CD4-positive, alpha-beta memory T cell (primary cell): ENCODE measurements at regions of chr17 and their contacts with region 1.

Region 1: GRCh38 chr17:63697341-63698286 is 2.3 kb downstream of the LIMD2 start:
- DNase-seq: peak; percentile 85 to 87 (median 86)
- H3K4me3 ChIP-seq: peak overlapping the region; percentile 90 to 98
- H3K4me3 Mint-ChIP-seq: peak overlapping the region; percentile 94 to 99 (median 98)
- H3K27ac ChIP-seq: peak overlapping the region; percentile 69
- H3K27ac Mint-ChIP-seq: peak overlapping the region; percentile 96 to 99 (median 98)
- H3K4me1 ChIP-seq: peaks cover 62% of the 10 kb centered on the region
- H3K4me1 Mint-ChIP-seq: peaks cover 21 to 73% (median 47%) of the 10 kb centered on the region in 4 donors
- H3K27me3 ChIP-seq: no peaks in the 10 kb centered on the region
- H3K27me3 Mint-ChIP-seq: no peaks in the 10 kb centered on the region

Region 2: GRCh38 chr17:63412234-63412633 is 285.4 kb before region 1 on chr17:
- CTCF ChIA-PET with region 1: no interaction called
- POLR2A ChIA-PET with region 1: no interaction called
- intact Hi-C with region 1: no loop called
- DNase-seq: no peak
- H3K4me3 ChIP-seq: no peak overlapping the region
- H3K4me3 Mint-ChIP-seq: no peak overlapping the region
- H3K27ac ChIP-seq: no peak overlapping the region
- H3K27ac Mint-ChIP-seq: peak overlapping the region in 1 of 7 donors; percentile 13
- H3K4me1 ChIP-seq: no peaks in the 10 kb centered on the region
- H3K4me1 Mint-ChIP-seq: no peaks in the 10 kb centered on the region
- H3K27me3 ChIP-seq: no peaks in the 10 kb centered on the region
- H3K27me3 Mint-ChIP-seq: no peaks in the 10 kb centered on the region

Region 3: DNA sequence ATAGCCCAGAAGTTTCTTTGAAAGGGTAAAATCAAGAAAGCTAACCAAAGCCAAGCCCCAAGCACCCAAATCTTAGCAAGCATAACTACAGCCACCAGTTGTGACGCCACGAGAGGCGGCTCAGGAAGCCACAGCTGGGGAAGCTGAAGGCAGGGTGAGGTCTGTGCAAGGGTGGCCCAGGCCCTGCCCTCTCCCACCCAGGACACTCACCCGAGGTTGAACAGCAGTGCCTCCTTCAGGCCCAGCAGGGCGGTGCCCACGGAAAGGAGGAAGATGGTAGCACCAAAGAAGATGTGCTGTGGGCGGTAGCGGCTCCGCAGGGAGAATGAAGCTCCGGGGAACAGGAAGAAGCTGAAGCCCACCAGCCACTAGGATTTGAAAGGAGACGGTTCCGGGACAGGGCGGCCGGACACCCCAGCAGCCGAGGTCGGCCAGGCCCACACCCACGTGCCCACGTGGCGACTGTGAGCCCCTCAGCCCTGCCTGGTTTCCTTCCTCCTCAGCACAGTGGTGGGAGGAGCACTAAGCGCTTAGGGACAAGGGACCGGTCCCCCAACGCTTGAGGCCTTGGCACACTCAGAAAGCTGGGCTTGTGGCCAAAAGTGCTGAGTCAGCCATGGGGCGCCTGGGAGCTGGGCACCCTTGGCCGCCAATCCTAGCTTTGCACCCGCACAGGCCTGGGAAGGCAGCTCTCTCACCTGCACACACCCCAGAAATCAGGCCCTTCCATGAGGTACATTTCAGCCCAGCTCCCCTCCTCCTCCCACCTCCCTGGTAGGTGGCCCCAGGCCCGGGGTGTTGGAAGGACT is 262.5 kb before region 1 on chr17:
- CTCF ChIA-PET with region 1: interaction called, 4 read pairs
- POLR2A ChIA-PET with region 1: interaction called, 52 read pairs
- intact Hi-C with region 1: no loop called
- DNase-seq: peak; percentile 70 to 82 (median 76)
- H3K4me3 ChIP-seq: no peak overlapping the region
- H3K4me3 Mint-ChIP-seq: peak overlapping the region in 7 of 8 donors; percentile 48 to 79 (median 65)
- H3K27ac ChIP-seq: no peak overlapping the region
- H3K27ac Mint-ChIP-seq: peak overlapping the region; percentile 86 to 97 (median 92)
- H3K4me1 ChIP-seq: peaks cover 56% of the 10 kb centered on the region
- H3K4me1 Mint-ChIP-seq: peaks cover 15 to 70% (median 41%) of the 10 kb centered on the region in 4 donors
- H3K27me3 ChIP-seq: no peaks in the 10 kb centered on the region
- H3K27me3 Mint-ChIP-seq: no peaks in the 10 kb centered on the region

Region 4: DNA sequence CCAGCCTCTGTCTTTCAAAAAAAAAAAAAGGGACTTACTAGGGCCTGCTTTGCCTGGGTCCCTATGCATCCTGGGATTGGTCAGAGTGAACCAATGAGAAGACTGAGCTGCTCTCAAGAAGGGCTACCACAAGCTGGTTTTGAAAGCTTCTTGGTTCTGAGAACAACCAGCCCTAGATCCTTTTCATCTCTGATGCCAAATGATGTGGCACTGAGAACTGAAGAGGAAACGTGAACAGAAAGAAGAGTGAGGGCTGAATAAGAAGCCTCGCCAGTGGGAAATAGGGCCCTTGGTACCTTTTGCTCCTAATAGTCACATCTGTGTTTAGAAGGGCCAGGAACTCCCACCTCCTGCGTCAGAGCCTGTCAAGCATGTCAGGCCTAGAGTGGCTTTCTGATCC is 86.3 kb before region 1 on chr17:
- CTCF ChIA-PET with region 1: interaction called, 8 read pairs
- POLR2A ChIA-PET with region 1: interaction called, 29 read pairs
- intact Hi-C with region 1: no loop called
- DNase-seq: peak in 4 of 5 donors; percentile 24 to 46 (median 39)
- H3K4me3 ChIP-seq: no peak overlapping the region
- H3K4me3 Mint-ChIP-seq: peak overlapping the region; percentile 9 to 80 (median 69)
- H3K27ac ChIP-seq: peak overlapping the region; percentile 46
- H3K27ac Mint-ChIP-seq: peak overlapping the region; percentile 62 to 99 (median 93)
- H3K4me1 ChIP-seq: peaks cover 36% of the 10 kb centered on the region
- H3K4me1 Mint-ChIP-seq: peaks cover 27 to 45% (median 32%) of the 10 kb centered on the region in 4 donors
- H3K27me3 ChIP-seq: no peaks in the 10 kb centered on the region
- H3K27me3 Mint-ChIP-seq: no peaks in the 10 kb centered on the region

Region 5: DNA sequence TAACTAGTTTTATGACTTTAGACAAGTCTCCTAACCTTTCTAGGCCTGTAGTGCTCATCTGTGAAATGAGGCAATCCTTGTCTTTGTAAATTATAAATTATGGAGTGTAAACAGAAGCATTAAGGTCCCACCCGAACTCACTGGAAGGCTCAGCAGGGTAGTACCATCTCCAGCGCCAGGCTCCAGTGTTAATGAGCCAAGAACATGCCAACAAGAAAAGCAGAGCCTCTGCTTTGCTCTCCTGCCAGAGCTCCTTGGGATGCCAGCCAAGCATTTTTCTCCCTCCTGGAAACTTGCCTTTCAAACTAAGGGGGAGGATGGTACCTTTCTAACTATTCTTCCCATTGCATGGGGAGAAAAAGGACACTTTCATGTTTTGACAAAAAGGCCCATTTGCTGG is 12.6 kb before region 1 on chr17:
- CTCF ChIA-PET with region 1: interaction called, 3 read pairs
- POLR2A ChIA-PET with region 1: interaction called, 1,362 read pairs
- intact Hi-C with region 1: no loop called
- DNase-seq: no peak
- H3K4me3 ChIP-seq: no peak overlapping the region
- H3K4me3 Mint-ChIP-seq: no peak overlapping the region
- H3K27ac ChIP-seq: no peak overlapping the region
- H3K27ac Mint-ChIP-seq: peak overlapping the region in 3 of 7 donors; percentile 32 to 80 (median 53)
- H3K4me1 ChIP-seq: no peaks in the 10 kb centered on the region
- H3K4me1 Mint-ChIP-seq: peaks cover 0 to 9% (median 1%) of the 10 kb centered on the region in 4 donors
- H3K27me3 ChIP-seq: no peaks in the 10 kb centered on the region
- H3K27me3 Mint-ChIP-seq: no peaks in the 10 kb centered on the region

Region 6: DNA sequence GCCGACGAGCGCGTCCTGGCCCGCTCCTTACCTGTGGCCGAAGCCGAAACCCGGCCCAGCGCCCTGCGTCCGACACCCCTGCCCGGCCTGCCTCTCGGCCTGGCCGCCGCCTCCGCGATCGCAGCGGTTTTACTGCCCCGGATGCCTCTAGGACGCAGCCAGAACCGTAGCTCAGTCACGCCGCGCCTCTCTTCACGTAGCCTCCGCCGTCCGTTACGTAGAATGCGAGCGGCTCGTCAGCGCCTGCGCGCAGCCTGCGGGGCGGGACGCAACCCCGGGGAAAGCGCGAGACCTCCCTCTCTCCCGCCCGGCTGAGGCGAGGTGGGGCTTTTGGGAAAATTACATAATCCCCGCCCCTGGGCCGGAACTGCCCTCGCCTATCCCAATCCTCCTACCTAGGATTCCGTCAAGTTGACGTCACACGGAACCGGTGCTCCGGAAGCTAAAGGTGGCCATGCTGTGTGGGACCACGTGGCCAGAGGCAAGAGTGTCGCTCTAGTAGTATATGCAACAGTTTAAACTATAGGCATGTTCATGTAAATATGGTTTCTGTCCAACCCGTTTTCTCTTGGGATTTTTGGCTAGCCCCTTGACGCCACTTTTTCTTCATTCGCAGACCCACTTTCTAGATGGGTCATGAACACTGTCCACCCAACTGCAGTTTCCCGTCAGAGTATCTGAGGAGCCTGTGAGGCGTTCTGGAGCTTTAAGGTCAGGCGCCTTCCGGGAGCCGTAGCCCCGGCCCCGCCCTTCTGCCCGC is 75.9 kb after region 1 on chr17 and contains the start of gene CCDC47:
- CTCF ChIA-PET with region 1: interaction called, 11 read pairs
- POLR2A ChIA-PET with region 1: interaction called, 178 read pairs
- intact Hi-C with region 1: loop called (anchors 1 kb)
- DNase-seq: peak; percentile 99
- H3K4me3 ChIP-seq: peak within 1 kb of the TSS; percentile 87 to 97
- H3K4me3 Mint-ChIP-seq: peak within 1 kb of the TSS; percentile 91 to 100 (median 99)
- H3K27ac ChIP-seq: peak within 1 kb of the TSS; percentile 99
- H3K27ac Mint-ChIP-seq: peak within 1 kb of the TSS; percentile 99 to 100 (median 100)
- H3K4me1 ChIP-seq: peaks cover 66% of the 10 kb centered on the region
- H3K4me1 Mint-ChIP-seq: peaks cover 33 to 81% (median 52%) of the 10 kb centered on the region in 4 donors
- H3K27me3 ChIP-seq: no peaks in the 10 kb centered on the region
- H3K27me3 Mint-ChIP-seq: no peaks in the 10 kb centered on the region
- total RNA-seq, gene CCDC47: 36.7 to 39.0 TPM

Region 7: GRCh38 chr17:63834431-63835166 is 137.0 kb after region 1 on chr17:
- CTCF ChIA-PET with region 1: interaction called, 4 read pairs
- POLR2A ChIA-PET with region 1: interaction called, 129 read pairs
- intact Hi-C with region 1: loop called (anchors 1 kb)
- DNase-seq: peak; percentile 51 to 82 (median 62)
- H3K4me3 ChIP-seq: no peak overlapping the region
- H3K4me3 Mint-ChIP-seq: peak overlapping the region in 1 of 8 donors; percentile 23
- H3K27ac ChIP-seq: no peak overlapping the region
- H3K27ac Mint-ChIP-seq: peak overlapping the region; percentile 75 to 89 (median 83)
- H3K4me1 ChIP-seq: peaks cover 69% of the 10 kb centered on the region
- H3K4me1 Mint-ChIP-seq: peaks cover 34 to 71% (median 49%) of the 10 kb centered on the region in 4 donors
- H3K27me3 ChIP-seq: no peaks in the 10 kb centered on the region
- H3K27me3 Mint-ChIP-seq: no peaks in the 10 kb centered on the region

Region 8: GRCh38 chr17:64020056-64020766 is 322.6 kb after region 1 on chr17 and contains the start of gene ICAM2:
- CTCF ChIA-PET with region 1: no interaction called
- POLR2A ChIA-PET with region 1: interaction called, 16 read pairs
- intact Hi-C with region 1: no loop called
- DNase-seq: peak; percentile 94 to 99 (median 97)
- H3K4me3 ChIP-seq: peak within 1 kb of the TSS; percentile 93 to 96
- H3K4me3 Mint-ChIP-seq: peak within 1 kb of the TSS; percentile 97 to 100 (median 99)
- H3K27ac ChIP-seq: peak within 1 kb of the TSS; percentile 93
- H3K27ac Mint-ChIP-seq: peak within 1 kb of the TSS; percentile 99 to 100 (median 100)
- H3K4me1 ChIP-seq: peaks cover 71% of the 10 kb centered on the region
- H3K4me1 Mint-ChIP-seq: peaks cover 51 to 85% (median 63%) of the 10 kb centered on the region in 4 donors
- H3K27me3 ChIP-seq: no peaks in the 10 kb centered on the region
- H3K27me3 Mint-ChIP-seq: peaks cover 0 to 1% of the 10 kb centered on the region in 2 donors
- total RNA-seq, gene ICAM2: 150 to 158 TPM